PC-3 (cell line): ENCODE measurements at regions of chr7 and their contacts with region 1.

Region 1: GRCh38 chr7:101058355-101058754 is 26.9 kb upstream of the TRIM56 start:
- DNase-seq: peak; percentile 46
- ATAC-seq: no peak
- H3K4me3 ChIP-seq: no peak overlapping the region
- H3K27ac ChIP-seq: no peak overlapping the region
- H3K4me1 ChIP-seq: no peaks in the 10 kb centered on the region
- H3K27me3 ChIP-seq: peaks cover 42% of the 10 kb centered on the region
- CTCF ChIP-seq: no peak

Region 2: GRCh38 chr7:100896732-100897608 is 161.4 kb before region 1 on chr7:
- CTCF ChIA-PET with region 1: interaction called, 3 read pairs
- POLR2A ChIA-PET with region 1: no interaction called
- intact Hi-C with region 1: loop called (anchors 1 kb)
- DNase-seq: peak; percentile 37
- ATAC-seq: peak; percentile 51
- H3K4me3 ChIP-seq: no peak overlapping the region
- H3K27ac ChIP-seq: no peak overlapping the region
- H3K4me1 ChIP-seq: peaks cover 4% of the 10 kb centered on the region; the same call in 1 of the 2 replicates
- H3K27me3 ChIP-seq: peaks cover 17% of the 10 kb centered on the region
- CTCF ChIP-seq: peak; percentile 83

Region 3: GRCh38 chr7:100965723-100966541 is 92.4 kb before region 1 on chr7:
- CTCF ChIA-PET with region 1: no interaction called
- POLR2A ChIA-PET with region 1: no interaction called
- intact Hi-C with region 1: loop called (anchors 1 kb)
- DNase-seq: peak; percentile 76
- ATAC-seq: peak; percentile 92
- H3K4me3 ChIP-seq: peak overlapping the region; percentile 15; the same call in 1 of the 2 replicates
- H3K27ac ChIP-seq: no peak overlapping the region
- H3K4me1 ChIP-seq: no peaks in the 10 kb centered on the region
- H3K27me3 ChIP-seq: peaks cover 31% of the 10 kb centered on the region
- CTCF ChIP-seq: peak; percentile 82

Region 4: DNA sequence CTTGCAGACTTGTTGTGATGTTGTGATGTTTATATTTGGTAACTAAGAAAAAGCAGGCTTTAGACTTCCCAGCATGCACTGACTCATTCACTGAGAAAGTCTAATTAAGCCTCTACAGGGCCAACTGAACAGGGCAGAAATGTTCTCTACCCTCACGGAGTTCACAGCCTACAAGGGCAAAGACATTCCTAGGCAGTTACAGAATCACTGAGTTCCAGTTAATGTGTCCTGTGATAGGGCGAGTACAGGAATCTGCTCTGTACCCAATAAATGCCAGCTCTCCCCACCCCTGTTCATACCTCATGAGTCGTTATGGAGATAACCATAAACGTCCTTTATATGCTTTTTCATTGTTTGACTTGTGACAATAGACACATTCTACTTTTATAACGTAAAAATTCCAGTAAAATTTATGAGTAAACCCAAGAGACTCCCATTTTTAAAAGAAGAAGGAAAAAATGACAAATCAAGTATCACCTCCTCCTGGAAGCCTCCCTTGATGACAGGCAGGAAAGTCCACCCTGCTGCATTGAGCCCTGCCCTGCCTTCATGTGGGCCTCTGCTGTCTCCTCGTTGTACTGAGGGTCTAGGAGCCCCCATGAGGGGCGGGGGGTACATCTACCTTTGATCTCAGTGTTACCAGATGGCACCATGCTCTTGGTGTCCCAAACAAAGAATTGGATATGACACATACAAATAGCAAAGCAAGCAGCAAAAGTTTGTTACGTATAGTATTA is 74.7 kb before region 1 on chr7:
- CTCF ChIA-PET with region 1: interaction called, 3 read pairs
- POLR2A ChIA-PET with region 1: no interaction called
- intact Hi-C with region 1: loop called (anchors 5 kb)
- DNase-seq: peak; percentile 87
- ATAC-seq: peak; percentile 91
- H3K4me3 ChIP-seq: no peak overlapping the region
- H3K27ac ChIP-seq: peak overlapping the region; percentile 91
- H3K4me1 ChIP-seq: peaks cover 27% of the 10 kb centered on the region
- H3K27me3 ChIP-seq: no peaks in the 10 kb centered on the region
- CTCF ChIP-seq: no peak

Region 5: DNA sequence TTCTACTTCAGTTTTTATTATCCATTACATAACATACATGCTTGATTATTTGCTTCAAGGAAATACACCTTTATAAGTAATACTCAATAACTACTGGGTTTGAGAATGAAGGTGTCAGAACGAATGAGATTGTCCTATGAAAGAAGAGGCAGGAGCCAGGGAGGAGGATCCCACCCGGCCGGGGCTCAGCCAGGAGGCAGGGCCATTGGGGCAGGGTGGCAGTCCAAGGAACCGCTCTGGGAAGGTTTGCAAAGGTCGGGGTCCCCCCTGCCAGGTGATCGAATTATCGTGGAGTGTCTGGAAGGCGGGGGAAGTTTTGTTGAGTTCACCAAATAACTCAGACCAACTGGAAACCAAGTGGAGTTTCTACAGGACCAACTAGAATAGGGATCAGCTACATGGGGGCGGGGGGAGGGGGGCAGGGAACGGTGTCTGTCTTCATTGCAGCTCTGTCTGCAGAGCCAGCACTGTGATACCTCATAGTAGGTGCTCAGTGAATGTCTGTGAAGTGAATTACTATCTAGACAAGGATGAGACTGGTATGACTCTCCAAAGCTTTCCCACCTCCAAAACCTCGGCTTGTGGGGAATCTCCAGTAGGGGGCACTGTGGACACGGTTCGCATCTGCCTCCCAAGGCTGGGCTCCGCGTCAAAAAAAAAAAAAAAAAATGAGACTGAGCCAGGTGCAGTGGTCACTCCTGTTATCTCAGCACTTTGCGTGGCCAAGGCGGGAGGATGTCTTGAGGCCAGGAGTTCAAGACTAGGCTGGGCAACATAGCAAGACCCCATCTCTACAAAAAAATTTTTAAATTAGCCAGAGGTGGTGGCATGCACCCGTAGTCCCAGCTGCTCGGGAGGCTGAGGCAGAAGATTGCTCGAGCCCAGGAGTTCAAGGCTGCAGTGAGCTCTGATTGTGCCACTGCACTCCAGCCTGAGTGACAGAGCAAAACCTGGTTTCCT is 36.3 kb after region 1 on chr7:
- CTCF ChIA-PET with region 1: no interaction called
- POLR2A ChIA-PET with region 1: interaction called, 16 read pairs
- intact Hi-C with region 1: no loop called
- DNase-seq: peak; percentile 72
- ATAC-seq: peak; percentile 34
- H3K4me3 ChIP-seq: no peak overlapping the region
- H3K27ac ChIP-seq: peak overlapping the region; percentile 42
- H3K4me1 ChIP-seq: peaks cover 19% of the 10 kb centered on the region
- H3K27me3 ChIP-seq: no peaks in the 10 kb centered on the region
- CTCF ChIP-seq: peak; percentile 75

Region 6: GRCh38 chr7:101126651-101127280 is 68.4 kb after region 1 on chr7 and contains the start of gene SERPINE1:
- CTCF ChIA-PET with region 1: no interaction called
- POLR2A ChIA-PET with region 1: no interaction called
- intact Hi-C with region 1: no loop called
- DNase-seq: peak; percentile 62
- ATAC-seq: peak; percentile 59
- H3K4me3 ChIP-seq: peak within 1 kb of the TSS; percentile 52
- H3K27ac ChIP-seq: 0 out of 2 replicates have a peak within 1 kb of the TSS, but pooled peaks have one; percentile 21
- H3K4me1 ChIP-seq: peaks cover 40% of the 10 kb centered on the region
- H3K27me3 ChIP-seq: no peaks in the 10 kb centered on the region
- CTCF ChIP-seq: 0 out of 2 replicates have a peak, but pooled peaks have one; percentile 20
- total RNA-seq, gene SERPINE1: 46.1 and 52.5 TPM in 2 replicates

Region 7: DNA sequence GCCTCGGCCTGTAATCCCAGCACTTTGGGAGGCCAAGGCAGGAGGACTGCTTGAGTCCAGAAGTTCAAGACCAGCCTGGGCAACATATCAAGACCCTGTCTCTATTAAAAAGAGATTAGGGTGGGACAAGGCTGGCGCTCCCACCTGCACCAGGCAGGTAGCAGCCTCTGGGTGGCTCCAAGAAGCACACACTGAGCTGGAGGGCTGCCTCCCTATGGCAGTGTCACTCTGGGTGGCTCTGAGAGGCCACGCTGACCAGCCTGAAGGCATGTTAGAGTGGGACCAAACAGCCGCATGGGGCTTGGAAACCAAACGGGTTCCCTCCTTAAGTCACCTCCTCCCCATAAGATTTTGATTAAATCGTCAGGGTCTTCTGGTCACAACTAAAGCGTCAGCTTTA is 284.5 kb after region 1 on chr7:
- CTCF ChIA-PET with region 1: no interaction called
- POLR2A ChIA-PET with region 1: no interaction called
- intact Hi-C with region 1: no loop called
- DNase-seq: no peak
- ATAC-seq: no peak
- H3K4me3 ChIP-seq: no peak overlapping the region
- H3K27ac ChIP-seq: no peak overlapping the region
- H3K4me1 ChIP-seq: no peaks in the 10 kb centered on the region
- H3K27me3 ChIP-seq: no peaks in the 10 kb centered on the region
- CTCF ChIP-seq: no peak